ENCODE measurements at regions of chr7 and their contacts with region 1.

Region 1: DNA sequence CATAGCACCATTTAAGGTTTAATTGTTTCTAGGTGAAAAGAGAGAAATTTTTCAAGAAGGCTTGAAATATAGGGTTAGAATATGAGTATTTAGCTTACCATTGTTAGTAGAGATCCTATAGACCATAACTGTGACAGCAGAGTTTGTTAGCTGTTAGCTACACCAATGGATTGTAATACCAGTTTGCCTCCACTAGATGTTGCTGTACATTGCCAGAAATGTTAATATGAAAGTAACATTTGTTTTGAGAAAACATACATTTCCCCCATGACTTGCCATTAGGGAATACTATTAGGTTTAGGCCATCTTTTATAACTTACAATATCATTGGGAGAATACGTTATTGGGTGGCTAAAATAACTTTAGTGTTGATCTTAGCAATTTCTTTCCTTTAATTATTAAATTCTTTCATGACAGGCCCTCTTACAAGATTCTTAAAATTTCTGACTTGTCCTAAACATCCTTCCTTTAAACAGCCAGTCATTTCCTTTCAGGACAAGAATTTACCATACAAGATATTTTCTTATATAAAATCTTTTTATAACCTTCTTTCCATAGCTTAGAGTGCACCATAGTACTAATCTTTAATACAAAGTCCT is 39.5 kb downstream of the ZNF117 start:
- DNase-seq: no peak
- H3K4me3 ChIP-seq: no peak overlapping the region
- H3K27ac ChIP-seq: no peak overlapping the region
- H3K4me1 ChIP-seq: no peaks in the 10 kb centered on the region
- H3K27me3 ChIP-seq: no peaks in the 10 kb centered on the region
- CTCF ChIP-seq: peak; percentile 86

Region 2: DNA sequence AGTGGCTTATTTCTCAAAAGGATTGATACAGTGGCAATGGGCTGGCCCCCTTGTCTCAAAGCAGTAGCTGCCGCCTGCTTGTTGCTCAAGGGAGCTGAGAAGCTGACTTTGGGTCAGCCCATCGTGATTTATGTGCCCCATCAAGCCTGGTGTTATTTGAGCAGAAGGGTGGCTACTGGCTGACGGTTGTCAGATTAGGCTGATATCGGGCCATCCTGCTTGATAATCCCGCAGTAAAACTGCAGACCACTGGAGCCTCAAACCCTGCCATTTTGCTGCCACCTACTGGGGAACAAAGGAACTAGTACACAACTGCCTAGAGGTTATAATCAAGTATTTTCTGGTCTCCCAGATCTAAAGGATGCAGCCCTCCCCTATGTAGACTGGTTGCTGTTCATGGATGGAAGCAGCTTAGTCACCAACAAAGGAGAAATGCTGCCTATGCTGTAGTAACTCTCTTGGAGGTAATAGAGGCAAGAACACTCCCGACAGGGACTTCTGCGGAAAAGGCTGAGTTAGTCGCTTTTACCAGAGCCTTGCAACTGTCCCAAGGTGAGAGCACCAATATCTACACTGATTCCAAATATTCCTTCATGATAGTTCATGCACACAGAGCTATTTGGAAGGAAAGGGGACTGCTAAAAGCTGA is 356.4 kb after region 1 on chr7:
- CTCF ChIA-PET with region 1: interaction called, 3 read pairs
- POLR2A ChIA-PET with region 1: no interaction called
- intact Hi-C with region 1: loop called (anchors 1 kb)
- DNase-seq: peak in 1 of 2 experiments; percentile 31
- H3K4me3 ChIP-seq: no peak overlapping the region
- H3K27ac ChIP-seq: no peak overlapping the region
- H3K4me1 ChIP-seq: no peaks in the 10 kb centered on the region
- H3K27me3 ChIP-seq: peaks cover 7% of the 10 kb centered on the region; the same call in 1 of the 2 replicates
- CTCF ChIP-seq: peak; percentile 85

Measured in PC-9 (cell line).